HepG2 (cell line): ENCODE measurements at regions of chr4 and their contacts with region 1.

Region 1: DNA sequence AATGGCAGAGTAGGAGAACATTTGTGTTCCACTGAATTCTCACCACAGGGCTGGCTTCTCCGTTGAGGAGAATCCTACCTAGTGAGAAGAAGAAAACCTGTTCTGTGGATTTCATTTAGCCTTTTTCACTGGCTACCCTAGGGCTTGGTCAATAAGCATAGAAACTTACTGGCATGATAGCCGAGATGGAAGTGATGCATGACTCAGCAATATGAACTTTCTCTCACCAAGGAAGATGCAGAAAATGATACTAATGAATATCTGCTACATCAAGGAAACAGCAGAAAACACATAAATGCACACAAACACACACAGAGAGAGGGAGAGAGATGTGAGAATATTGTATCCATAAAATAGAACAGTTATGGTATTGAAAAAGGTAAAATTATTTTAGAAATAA is 216.3 kb downstream of the HHIP start:
- DNase-seq: no peak
- ATAC-seq: no peak; the same call in 2 of the 3 replicates
- H3K4me3 ChIP-seq: no peak overlapping the region
- H3K27ac ChIP-seq: no peak overlapping the region
- H3K4me1 ChIP-seq: peaks cover 16% of the 10 kb centered on the region
- H3K27me3 ChIP-seq: no peaks in the 10 kb centered on the region
- CTCF ChIP-seq: no peak
- EP300 ChIP-seq: no peak
- POLR2A ChIP-seq: no peak
- RAD21 ChIP-seq: no peak

Region 2: GRCh38 chr4:144799486-144799885 is 62.7 kb before region 1 on chr4:
- CTCF ChIA-PET with region 1: no interaction called
- POLR2A ChIA-PET with region 1: no interaction called
- in situ Hi-C with region 1: no loop called
- intact Hi-C with region 1: no loop called
- DNase-seq: no peak
- ATAC-seq: no peak
- H3K4me3 ChIP-seq: no peak overlapping the region
- H3K27ac ChIP-seq: no peak overlapping the region
- H3K4me1 ChIP-seq: no peaks in the 10 kb centered on the region
- H3K27me3 ChIP-seq: no peaks in the 10 kb centered on the region
- CTCF ChIP-seq: no peak
- EP300 ChIP-seq: no peak
- POLR2A ChIP-seq: no peak
- RAD21 ChIP-seq: no peak

Region 3: GRCh38 chr4:144872508-144873225 is 10.5 kb after region 1 on chr4:
- CTCF ChIA-PET with region 1: no interaction called
- POLR2A ChIA-PET with region 1: no interaction called
- in situ Hi-C with region 1: no loop called
- intact Hi-C with region 1: loop called (anchors 1 kb)
- DNase-seq: no peak
- ATAC-seq: no peak
- H3K4me3 ChIP-seq: no peak overlapping the region
- H3K27ac ChIP-seq: no peak overlapping the region
- H3K4me1 ChIP-seq: no peaks in the 10 kb centered on the region
- H3K27me3 ChIP-seq: 0 out of 5 replicates have a peak, but pooled peaks cover 0 to 1% of the 10 kb centered on the region in 2 experiments
- CTCF ChIP-seq: no peak
- EP300 ChIP-seq: no peak
- POLR2A ChIP-seq: no peak
- RAD21 ChIP-seq: no peak